ENCODE measurements at regions of chr19 and their contacts with region 1.

Region 1: DNA sequence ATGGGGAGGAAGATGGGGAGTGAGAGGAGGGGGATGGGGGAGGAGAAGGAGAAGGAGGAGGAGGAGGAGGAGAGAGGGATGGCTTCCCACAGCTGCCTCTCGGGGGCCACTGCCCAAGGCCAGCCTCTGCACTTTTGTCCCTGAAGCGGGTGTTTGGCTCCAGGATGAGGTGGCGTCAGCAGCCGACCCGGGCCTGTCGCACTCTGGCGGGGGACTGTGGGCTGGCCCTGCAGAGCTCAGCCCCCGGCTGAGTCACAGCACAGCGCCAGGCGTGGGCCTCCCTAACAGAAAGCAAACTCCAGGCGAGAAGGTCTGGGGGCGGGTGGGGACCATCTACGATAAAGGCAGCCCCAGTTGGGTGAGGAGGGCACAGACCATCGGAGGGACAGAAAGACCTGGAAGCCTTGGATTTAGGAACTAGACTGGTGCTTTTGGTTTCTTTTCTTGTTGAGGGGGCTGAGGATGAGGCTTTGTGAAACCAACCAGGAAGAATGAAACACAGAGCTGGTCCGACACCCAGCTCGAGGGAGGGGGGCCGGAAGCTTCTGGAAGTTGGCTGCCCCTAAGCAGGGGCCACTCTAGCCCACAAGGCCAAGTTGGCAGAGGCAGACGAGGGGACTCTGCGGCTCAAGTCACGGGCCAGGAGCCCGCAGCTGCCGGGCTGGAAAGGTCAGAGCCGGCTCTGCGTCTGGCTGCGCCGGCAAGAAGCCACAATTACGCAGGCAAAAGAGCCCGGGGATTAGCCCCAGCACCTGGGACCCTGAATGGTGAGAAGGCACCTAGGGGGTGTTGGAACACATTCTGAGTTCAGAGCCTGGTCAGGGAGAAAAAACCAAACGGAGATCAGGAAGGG is 18.2 kb downstream of the LSM4 start:
- DNase-seq: peak; percentile 82
- ATAC-seq: peak; percentile 75
- H3K4me3 Mint-ChIP-seq: peak overlapping the region; percentile 90
- H3K27ac Mint-ChIP-seq: peak overlapping the region; percentile 93
- H3K4me1 Mint-ChIP-seq: peaks cover 29% of the 10 kb centered on the region
- H3K27me3 Mint-ChIP-seq: no peaks in the 10 kb centered on the region

Region 2: DNA sequence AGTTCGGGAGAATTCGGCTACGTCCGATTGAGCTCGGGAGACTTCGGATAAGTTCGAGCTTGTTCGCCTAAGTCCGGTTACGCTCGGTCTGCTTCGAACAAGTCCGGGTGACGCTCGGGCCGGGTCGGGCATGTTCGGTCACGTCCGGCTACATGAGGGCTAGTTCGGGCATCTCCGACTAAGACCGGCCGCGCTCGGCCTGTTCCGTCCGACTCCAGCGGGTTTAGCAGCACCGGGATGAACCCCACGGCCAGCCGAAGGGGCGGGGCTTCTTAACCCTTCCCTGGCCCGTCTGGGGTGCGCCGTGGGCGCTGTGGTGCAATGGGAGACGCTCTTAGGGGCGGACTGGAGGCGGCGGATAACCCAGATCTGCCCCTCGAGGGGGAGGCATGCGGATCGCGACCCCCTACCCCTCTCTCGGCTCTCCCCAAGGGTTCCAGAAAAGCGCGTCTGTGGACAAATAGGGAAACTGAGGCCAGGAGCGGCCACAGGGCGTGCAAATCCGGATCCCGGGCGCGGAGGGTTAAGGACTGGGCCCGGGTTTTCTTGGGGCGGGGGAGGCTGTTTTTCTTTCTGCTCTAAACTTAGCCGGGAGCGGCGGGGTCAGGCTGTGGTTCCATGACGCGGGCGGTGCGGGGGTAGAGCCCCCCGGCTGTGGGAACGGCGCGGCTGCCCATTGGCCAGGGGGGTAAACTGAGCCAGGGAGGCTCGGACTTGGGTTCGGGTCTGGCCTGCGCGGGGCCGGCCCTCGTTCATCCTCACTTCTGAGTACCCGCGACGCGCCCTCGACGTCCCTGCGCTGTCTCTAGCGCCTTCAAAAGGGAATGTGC is 79.9 kb before region 1 on chr19:
- POLR2A ChIA-PET with region 1: no interaction called
- DNase-seq: peak; percentile 86
- ATAC-seq: peak; percentile 99
- H3K4me3 Mint-ChIP-seq: peak overlapping the region; percentile 89
- H3K27ac Mint-ChIP-seq: peak overlapping the region; percentile 61
- H3K4me1 Mint-ChIP-seq: peaks cover 13% of the 10 kb centered on the region
- H3K27me3 Mint-ChIP-seq: peaks cover 58% of the 10 kb centered on the region

Region 3: DNA sequence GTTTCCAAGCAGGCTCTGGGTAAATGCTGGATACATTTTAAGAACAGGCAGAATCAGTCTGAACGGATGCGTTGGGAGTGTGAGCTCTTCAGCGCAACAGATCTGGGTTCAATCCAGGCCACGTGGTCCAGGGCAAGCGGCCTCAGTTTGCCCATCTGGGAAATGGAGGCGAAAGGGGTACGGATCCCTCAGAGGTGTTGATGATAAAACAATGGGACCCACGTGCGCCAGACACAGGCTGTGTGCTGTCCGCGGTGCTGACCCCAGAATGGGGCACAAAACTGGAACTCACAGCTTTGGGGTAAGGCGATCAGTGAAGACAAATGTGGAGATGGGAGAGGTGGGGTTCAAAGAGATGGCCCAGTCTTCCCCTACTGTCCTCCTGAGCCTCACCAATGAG is 65.4 kb before region 1 on chr19:
- POLR2A ChIA-PET with region 1: no interaction called
- DNase-seq: no peak
- ATAC-seq: no peak
- H3K4me3 Mint-ChIP-seq: no peak overlapping the region
- H3K27ac Mint-ChIP-seq: no peak overlapping the region
- H3K4me1 Mint-ChIP-seq: no peaks in the 10 kb centered on the region
- H3K27me3 Mint-ChIP-seq: peaks cover 10% of the 10 kb centered on the region

Region 4: DNA sequence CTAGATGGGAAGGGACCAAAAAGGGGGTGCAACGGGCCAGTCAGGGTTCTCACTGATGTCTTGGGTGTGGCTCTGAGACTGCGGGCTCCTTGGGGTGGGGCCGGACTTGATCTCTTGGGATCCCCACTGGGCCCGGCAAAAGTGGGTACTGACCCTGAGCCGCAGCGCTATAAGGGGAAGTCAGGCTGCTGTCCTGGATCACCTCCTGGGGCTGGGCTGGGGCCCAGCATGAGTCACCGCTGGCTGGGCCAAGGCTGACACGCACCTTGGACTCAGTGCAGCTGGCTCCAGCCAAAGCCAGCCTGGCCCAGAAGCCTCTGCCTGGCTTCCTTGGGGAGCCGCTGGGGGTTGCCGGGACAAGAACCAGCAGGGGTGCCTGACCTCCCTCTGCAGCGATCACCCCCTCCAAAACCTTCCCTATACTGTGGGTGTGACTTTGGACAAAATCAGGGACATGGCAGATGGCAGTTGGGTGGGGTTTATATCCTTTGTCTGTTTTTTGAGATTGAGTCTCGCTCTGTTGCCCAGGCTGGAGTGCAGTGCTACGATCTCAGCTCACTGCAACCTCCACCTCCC is 29.8 kb before region 1 on chr19:
- POLR2A ChIA-PET with region 1: interaction called, 1,033 read pairs
- DNase-seq: no peak
- ATAC-seq: no peak
- H3K4me3 Mint-ChIP-seq: peak overlapping the region; percentile 28
- H3K27ac Mint-ChIP-seq: peak overlapping the region; percentile 56
- H3K4me1 Mint-ChIP-seq: peaks cover 38% of the 10 kb centered on the region
- H3K27me3 Mint-ChIP-seq: no peaks in the 10 kb centered on the region

Region 5: DNA sequence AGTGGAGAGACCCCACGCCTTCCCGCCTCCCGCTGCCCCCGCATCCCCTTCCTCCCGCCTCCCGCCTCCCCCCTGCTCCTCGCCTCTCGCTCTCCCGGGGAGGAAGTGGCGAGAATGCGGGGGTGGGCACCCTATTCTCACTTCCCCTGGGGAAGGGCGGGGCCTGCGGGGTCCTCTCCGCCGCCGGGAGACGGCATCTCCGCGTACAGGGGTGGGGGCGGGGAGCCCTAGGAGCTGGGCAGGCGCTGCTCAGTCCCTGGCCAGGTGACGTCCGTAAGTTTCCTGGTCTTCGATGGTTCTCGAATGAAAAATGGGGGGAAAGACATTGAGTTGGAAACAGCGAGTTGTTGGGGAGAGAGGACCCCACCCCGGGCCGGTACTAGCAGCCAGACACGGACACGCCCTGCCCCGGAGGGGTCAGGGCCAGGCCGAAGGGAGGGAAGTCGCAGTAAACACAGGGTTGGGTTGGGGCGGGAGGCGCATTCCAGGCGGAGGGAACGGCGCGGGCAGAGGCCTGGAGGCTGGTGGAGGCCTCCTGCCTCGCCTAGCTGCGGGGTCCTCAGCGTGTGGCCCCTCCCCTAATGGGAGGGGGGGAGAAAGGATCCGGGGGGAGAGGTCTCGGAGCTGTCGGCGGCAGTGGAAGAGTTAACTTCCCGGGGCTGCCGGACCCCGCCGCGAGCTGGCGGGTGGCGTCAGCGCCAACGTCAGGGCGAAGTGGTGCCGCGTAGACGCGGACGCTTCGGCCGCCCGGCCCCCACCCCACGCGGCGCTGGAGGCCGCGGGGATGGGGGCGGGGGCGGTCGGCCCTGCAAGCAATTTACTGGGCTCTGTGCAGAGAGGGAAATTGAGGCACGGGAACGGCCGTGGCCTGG is 12.9 kb before region 1 on chr19:
- POLR2A ChIA-PET with region 1: interaction called, 846 read pairs
- DNase-seq: peak; percentile 87
- ATAC-seq: peak; percentile 40
- H3K4me3 Mint-ChIP-seq: peak overlapping the region; percentile 94
- H3K27ac Mint-ChIP-seq: peak overlapping the region; percentile 91
- H3K4me1 Mint-ChIP-seq: peaks cover 52% of the 10 kb centered on the region
- H3K27me3 Mint-ChIP-seq: no peaks in the 10 kb centered on the region

Region 6: GRCh38 chr19:18338541-18338940 is 33.9 kb after region 1 on chr19:
- POLR2A ChIA-PET with region 1: no interaction called
- DNase-seq: no peak
- ATAC-seq: no peak
- H3K4me3 Mint-ChIP-seq: peak overlapping the region; percentile 42
- H3K27ac Mint-ChIP-seq: no peak overlapping the region
- H3K4me1 Mint-ChIP-seq: peaks cover 13% of the 10 kb centered on the region
- H3K27me3 Mint-ChIP-seq: no peaks in the 10 kb centered on the region

Region 7: DNA sequence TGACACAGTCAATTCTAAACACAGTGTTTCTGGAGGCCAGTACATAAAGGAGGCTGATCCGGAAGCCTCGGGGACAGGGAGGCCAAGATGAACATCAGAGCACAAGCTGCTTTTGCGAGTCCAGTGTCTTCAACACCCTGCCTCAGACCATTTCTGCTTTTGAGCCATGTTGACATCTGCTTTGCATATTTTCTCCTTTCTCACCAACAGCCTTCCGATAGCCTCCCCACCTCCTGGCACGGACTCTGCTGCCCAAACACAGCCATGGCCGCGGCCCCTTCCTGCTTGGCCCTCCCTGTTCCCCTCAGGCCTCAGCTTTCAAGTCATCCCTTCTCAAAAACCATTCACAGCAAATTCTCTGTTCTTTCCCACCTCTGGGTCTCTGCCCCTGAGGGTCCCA is 89.2 kb after region 1 on chr19:
- POLR2A ChIA-PET with region 1: no interaction called
- DNase-seq: no peak
- ATAC-seq: no peak
- H3K4me3 Mint-ChIP-seq: no peak overlapping the region
- H3K27ac Mint-ChIP-seq: no peak overlapping the region
- H3K4me1 Mint-ChIP-seq: peaks cover 12% of the 10 kb centered on the region
- H3K27me3 Mint-ChIP-seq: peaks cover 53% of the 10 kb centered on the region

Measured in activated naive CD8-positive, alpha-beta T cell treated with anti-CD3 and anti-CD28 coated beads, Interleukin-2, amount 10 ng/mL, durations not matched to agents 7 days and 5 days (primary cell).